CD4-positive, alpha-beta memory T cell (primary cell): ENCODE measurements at regions of chr6 and their contacts with region 1.

Region 1: DNA sequence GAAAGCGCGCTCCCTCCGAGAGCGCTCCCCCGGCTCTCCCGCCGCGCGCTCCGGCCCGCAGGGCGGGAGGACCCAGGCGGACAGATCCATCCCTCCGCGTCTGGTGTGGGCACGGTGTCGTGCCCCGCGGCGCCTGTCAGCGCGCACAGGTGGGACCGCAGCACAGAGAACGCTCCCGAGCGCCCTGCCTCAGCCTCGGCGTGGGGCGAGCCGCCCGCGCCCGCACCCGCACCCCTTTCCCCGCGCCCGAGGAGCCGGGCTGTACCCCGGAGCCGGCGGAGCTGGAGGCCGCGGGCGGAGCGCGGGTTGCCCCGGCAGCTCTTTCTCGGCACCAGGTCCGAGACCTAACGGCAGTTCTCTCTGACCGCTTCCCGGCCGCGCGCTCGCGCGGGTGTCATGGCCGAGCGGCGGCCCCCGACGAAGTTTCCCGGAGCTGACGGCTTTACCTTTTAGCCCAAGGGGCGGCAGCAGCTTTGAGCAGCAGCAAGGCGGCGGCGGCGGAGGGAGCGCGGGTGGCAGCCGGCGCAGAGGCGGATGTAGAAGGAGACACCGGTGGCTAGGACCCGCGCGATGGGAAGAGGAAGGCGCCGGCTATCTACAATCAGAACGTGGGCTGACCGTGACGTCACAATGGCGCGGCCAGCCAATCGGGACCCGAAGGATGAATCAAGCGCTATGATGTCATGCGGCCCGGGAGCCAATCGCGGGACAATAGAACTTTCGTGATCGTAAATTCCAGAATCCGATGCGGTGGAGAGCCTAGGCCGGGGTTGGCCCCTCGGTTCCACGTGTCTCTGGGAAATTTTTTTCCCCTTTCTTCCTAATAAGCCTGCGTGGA is at the start of gene ELOVL5:
- DNase-seq: peak; percentile 92 to 98 (median 94)
- H3K4me3 ChIP-seq: peak within 1 kb of the TSS; percentile 55 to 88
- H3K4me3 Mint-ChIP-seq: peak within 1 kb of the TSS; percentile 94 to 99 (median 98)
- H3K27ac ChIP-seq: peak within 1 kb of the TSS; percentile 96
- H3K27ac Mint-ChIP-seq: peak within 1 kb of the TSS; percentile 97 to 99 (median 98)
- H3K4me1 ChIP-seq: peaks cover 42% of the 10 kb centered on the region
- H3K4me1 Mint-ChIP-seq: peaks cover 40 to 53% (median 46%) of the 10 kb centered on the region in 4 donors
- H3K27me3 ChIP-seq: no peaks in the 10 kb centered on the region
- H3K27me3 Mint-ChIP-seq: no peaks in the 10 kb centered on the region
- total RNA-seq, gene ELOVL5: 108 to 111 TPM

Region 2: DNA sequence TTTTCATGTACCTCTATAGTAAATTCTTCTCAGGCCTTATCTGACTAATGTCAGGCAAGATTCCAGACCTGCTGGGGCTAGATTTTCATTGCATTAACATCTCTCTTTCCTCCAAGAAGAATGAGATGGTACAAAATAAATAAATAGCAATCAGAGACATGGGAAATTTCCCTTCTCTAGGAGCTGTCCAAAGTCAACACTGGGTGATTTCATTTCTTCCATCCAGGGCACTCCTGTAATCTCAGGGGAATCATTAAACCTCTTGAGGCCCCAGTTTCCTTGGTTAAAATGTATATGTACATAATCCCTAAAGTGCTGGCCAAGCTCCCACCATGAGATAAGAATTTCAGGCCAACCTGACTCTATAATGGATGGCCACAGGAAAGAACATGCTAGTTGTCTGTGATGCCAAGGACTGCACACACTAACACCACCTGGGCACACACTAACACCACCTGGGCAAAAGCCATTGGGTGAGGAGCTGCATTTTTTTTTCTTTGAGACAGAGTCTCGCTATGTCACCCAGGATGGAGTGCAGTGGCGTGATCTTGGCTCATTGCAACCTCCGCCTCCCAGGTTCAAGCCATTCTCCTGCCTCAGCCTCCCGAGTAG is 1105.2 kb before region 1 on chr6:
- CTCF ChIA-PET with region 1: no interaction called
- POLR2A ChIA-PET with region 1: no interaction called
- intact Hi-C with region 1: no loop called
- DNase-seq: no peak
- H3K4me3 ChIP-seq: no peak overlapping the region
- H3K4me3 Mint-ChIP-seq: no peak overlapping the region
- H3K27ac ChIP-seq: no peak overlapping the region
- H3K27ac Mint-ChIP-seq: no peak overlapping the region
- H3K4me1 ChIP-seq: no peaks in the 10 kb centered on the region
- H3K4me1 Mint-ChIP-seq: peaks cover 0 to 4% (median 1%) of the 10 kb centered on the region in 4 donors
- H3K27me3 ChIP-seq: no peaks in the 10 kb centered on the region
- H3K27me3 Mint-ChIP-seq: peaks cover 0 to 8% of the 10 kb centered on the region in 2 donors

Region 3: DNA sequence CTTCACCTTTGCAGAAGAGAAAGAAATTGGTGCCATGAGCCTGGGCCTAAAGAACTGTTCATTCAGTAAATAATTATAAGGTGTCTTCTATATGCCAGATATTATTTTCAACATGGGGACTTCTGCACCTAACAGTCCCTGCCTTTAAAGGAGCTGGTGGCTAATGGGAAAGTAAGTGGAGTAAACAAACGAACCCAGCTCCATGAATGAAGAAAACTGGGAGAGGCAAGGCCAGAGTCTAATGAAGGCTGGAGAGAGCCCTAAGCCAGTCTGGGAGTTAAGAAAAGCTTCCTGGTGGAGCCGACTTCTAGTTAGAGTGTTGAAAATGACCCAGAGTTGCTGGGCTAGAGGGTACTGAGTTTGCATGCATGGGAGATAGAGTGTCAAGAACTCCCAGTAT is 952.6 kb before region 1 on chr6:
- CTCF ChIA-PET with region 1: no interaction called
- POLR2A ChIA-PET with region 1: no interaction called
- intact Hi-C with region 1: no loop called
- DNase-seq: no peak
- H3K4me3 ChIP-seq: no peak overlapping the region
- H3K4me3 Mint-ChIP-seq: peak overlapping the region in 7 of 8 donors; percentile 9 to 87 (median 57)
- H3K27ac ChIP-seq: no peak overlapping the region
- H3K27ac Mint-ChIP-seq: peak overlapping the region; percentile 95 to 99 (median 96)
- H3K4me1 ChIP-seq: peaks cover 100% of the 10 kb centered on the region
- H3K4me1 Mint-ChIP-seq: peaks cover 76 to 100% (median 87%) of the 10 kb centered on the region in 4 donors
- H3K27me3 ChIP-seq: no peaks in the 10 kb centered on the region
- H3K27me3 Mint-ChIP-seq: no peaks in the 10 kb centered on the region

Region 4: GRCh38 chr6:53189554-53189953 is 159.0 kb before region 1 on chr6:
- CTCF ChIA-PET with region 1: no interaction called
- POLR2A ChIA-PET with region 1: interaction called, 4 read pairs
- intact Hi-C with region 1: loop called (anchors 5 kb)
- DNase-seq: no peak
- H3K4me3 ChIP-seq: no peak overlapping the region
- H3K4me3 Mint-ChIP-seq: peak overlapping the region in 1 of 8 donors; percentile 7
- H3K27ac ChIP-seq: no peak overlapping the region
- H3K27ac Mint-ChIP-seq: no peak overlapping the region
- H3K4me1 ChIP-seq: peaks cover 22% of the 10 kb centered on the region
- H3K4me1 Mint-ChIP-seq: peaks cover 6 to 23% (median 19%) of the 10 kb centered on the region in 4 donors
- H3K27me3 ChIP-seq: no peaks in the 10 kb centered on the region
- H3K27me3 Mint-ChIP-seq: no peaks in the 10 kb centered on the region

Region 5: DNA sequence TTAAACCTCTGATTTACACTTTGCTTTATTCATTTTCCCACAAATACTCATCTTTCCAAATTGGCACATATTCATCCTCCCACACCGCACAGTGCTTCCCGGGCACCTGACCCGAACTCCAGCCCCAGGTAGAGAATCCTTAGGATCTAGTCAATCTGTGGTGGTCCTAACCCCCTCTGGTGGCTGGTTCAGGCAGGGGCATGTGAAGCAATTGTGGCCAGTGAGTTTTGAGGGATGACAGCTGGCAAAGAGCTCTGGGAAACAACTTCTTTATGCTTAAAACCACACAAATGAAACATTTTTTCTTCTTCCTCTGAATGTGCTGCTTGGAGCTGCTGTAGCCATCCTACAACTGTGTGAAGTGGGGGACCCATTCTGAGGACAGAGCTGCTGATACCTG is 54.5 kb before region 1 on chr6:
- CTCF ChIA-PET with region 1: interaction called, 21 read pairs
- POLR2A ChIA-PET with region 1: interaction called, 130 read pairs
- intact Hi-C with region 1: loop called (anchors 1 kb)
- DNase-seq: no peak
- H3K4me3 ChIP-seq: no peak overlapping the region
- H3K4me3 Mint-ChIP-seq: peak overlapping the region in 2 of 8 donors; percentile 6 to 34
- H3K27ac ChIP-seq: peak overlapping the region; percentile 27
- H3K27ac Mint-ChIP-seq: peak overlapping the region; percentile 53 to 94 (median 83)
- H3K4me1 ChIP-seq: peaks cover 97% of the 10 kb centered on the region
- H3K4me1 Mint-ChIP-seq: peaks cover 69 to 97% (median 83%) of the 10 kb centered on the region in 4 donors
- H3K27me3 ChIP-seq: no peaks in the 10 kb centered on the region
- H3K27me3 Mint-ChIP-seq: no peaks in the 10 kb centered on the region

Region 6: DNA sequence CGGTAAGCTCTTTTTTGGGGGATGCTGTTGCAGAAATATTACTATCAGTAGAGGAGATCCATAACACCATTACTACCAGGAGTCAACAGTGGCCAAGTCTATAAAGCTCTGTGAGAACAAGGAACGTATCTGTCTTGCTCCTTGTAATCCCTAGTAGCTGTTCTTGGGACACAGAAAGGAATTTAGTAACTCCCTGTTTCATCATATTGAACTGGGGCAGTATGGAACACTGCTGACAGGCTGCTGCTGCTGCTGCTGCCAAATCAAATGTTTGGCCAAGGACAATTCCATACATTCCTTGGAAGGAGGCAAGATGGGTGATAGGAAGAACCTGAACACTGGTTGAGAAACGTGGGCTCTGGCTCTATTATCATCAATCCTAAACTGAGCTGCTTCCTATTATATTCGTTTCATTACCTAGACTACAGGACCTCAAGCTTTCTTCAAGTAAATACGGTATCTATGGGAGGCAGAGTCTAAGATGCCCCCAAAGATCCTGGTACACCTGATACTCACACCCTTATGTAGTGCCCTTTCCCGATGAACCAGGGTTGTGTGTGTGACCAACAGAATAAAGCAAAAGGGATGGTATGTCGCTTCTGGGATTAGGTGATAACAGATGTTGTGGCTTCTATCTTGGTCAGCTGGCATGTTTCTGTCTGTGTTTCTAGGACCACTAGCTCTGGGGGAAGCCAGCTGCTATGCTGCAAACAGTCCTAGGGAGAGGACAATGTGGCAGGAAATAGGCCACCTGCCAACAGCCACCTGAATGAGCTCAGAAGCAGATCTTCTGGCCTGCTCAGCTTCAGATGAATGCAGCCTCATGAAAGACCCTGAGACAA is 39.3 kb before region 1 on chr6:
- CTCF ChIA-PET with region 1: interaction called, 6 read pairs
- POLR2A ChIA-PET with region 1: interaction called, 130 read pairs
- intact Hi-C with region 1: no loop called
- DNase-seq: peak in 2 of 5 donors; percentile 24 to 48
- H3K4me3 ChIP-seq: no peak overlapping the region
- H3K4me3 Mint-ChIP-seq: peak overlapping the region in 7 of 8 donors; percentile 53 to 83 (median 65)
- H3K27ac ChIP-seq: peak overlapping the region; percentile 51
- H3K27ac Mint-ChIP-seq: peak overlapping the region; percentile 79 to 93 (median 85)
- H3K4me1 ChIP-seq: peaks cover 80% of the 10 kb centered on the region
- H3K4me1 Mint-ChIP-seq: peaks cover 72 to 84% (median 79%) of the 10 kb centered on the region in 4 donors
- H3K27me3 ChIP-seq: no peaks in the 10 kb centered on the region
- H3K27me3 Mint-ChIP-seq: no peaks in the 10 kb centered on the region

Region 7: DNA sequence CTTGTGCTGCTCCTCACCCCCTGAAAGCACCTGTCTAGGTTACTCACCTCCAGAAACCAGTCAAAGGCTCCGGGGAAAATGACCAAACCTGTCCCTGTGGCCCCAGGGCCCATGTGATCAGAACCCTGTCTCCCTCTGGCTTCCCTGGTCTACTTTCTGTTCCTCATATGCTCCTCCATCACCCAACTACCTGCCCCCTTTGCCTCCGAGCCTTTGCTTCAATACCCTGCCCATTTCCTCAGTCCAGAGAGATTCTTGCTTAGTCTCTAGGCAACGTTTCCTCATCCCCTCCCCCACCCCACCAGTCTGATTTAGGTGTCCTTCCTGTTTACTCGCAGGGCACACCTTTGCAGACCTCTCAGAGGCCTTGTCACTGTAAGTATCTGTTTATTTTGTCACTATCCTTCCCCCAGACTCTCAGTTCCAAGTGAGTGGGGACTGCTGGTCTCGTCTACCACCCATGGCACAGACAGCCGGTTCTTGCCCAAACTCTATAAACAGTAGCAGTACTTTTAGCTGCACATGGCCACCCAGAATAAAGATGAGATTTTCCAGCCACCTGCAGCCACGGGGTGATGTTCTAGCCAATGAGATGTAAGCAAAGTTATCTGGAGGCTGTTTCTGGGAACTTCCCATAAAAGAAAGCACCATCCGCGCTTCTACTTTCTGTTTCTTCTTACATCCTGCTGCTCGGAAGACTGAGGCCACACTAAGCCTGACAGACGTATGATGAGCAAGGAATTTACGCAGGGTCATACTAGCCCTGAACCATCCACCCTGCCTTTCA is 13.2 kb before region 1 on chr6:
- CTCF ChIA-PET with region 1: interaction called, 29 read pairs
- POLR2A ChIA-PET with region 1: interaction called, 202 read pairs
- intact Hi-C with region 1: loop called (anchors 1 kb)
- DNase-seq: peak; percentile 80 to 92 (median 86)
- H3K4me3 ChIP-seq: peak overlapping the region; percentile 32 to 66
- H3K4me3 Mint-ChIP-seq: peak overlapping the region; percentile 85 to 96 (median 91)
- H3K27ac ChIP-seq: peak overlapping the region; percentile 88
- H3K27ac Mint-ChIP-seq: peak overlapping the region; percentile 95 to 100 (median 99)
- H3K4me1 ChIP-seq: peaks cover 96% of the 10 kb centered on the region
- H3K4me1 Mint-ChIP-seq: peaks cover 80 to 94% (median 87%) of the 10 kb centered on the region in 4 donors
- H3K27me3 ChIP-seq: no peaks in the 10 kb centered on the region
- H3K27me3 Mint-ChIP-seq: no peaks in the 10 kb centered on the region

Region 8: GRCh38 chr6:53544470-53545308 is 196.1 kb after region 1 on chr6 and contains the start of gene GCLC:
- CTCF ChIA-PET with region 1: no interaction called
- POLR2A ChIA-PET with region 1: no interaction called
- intact Hi-C with region 1: loop called (anchors 5 kb)
- DNase-seq: peak; percentile 82 to 85 (median 84)
- H3K4me3 ChIP-seq: peak within 1 kb of the TSS; percentile 61 to 63
- H3K4me3 Mint-ChIP-seq: peak within 1 kb of the TSS; percentile 95 to 99 (median 98)
- H3K27ac ChIP-seq: peak within 1 kb of the TSS; percentile 59
- H3K27ac Mint-ChIP-seq: peak within 1 kb of the TSS; percentile 79 to 96 (median 94)
- H3K4me1 ChIP-seq: peaks cover 51% of the 10 kb centered on the region
- H3K4me1 Mint-ChIP-seq: peaks cover 47 to 73% (median 59%) of the 10 kb centered on the region in 4 donors
- H3K27me3 ChIP-seq: no peaks in the 10 kb centered on the region
- H3K27me3 Mint-ChIP-seq: no peaks in the 10 kb centered on the region
- total RNA-seq, gene GCLC: 39.6 to 40.9 TPM